IMR-90 (cell line): ENCODE measurements at regions of chr3 and their contacts with region 1.

Region 1: GRCh38 chr3:42547401-42547945 is 34.3 kb downstream of the SEC22C start:
- DNase-seq: peak; percentile 44
- ATAC-seq: peak; percentile 81
- H3K4me3 ChIP-seq: no peak overlapping the region
- H3K27ac ChIP-seq: no peak overlapping the region
- H3K4me1 ChIP-seq: no peaks in the 10 kb centered on the region; the same call in 1 of the 2 replicates
- H3K27me3 ChIP-seq: no peaks in the 10 kb centered on the region
- CTCF ChIP-seq: peak; percentile 74
- POLR2A ChIP-seq: no peak
- RAD21 ChIP-seq: peak; percentile 45

Region 2: GRCh38 chr3:42376344-42376798 is 171.1 kb before region 1 on chr3:
- CTCF ChIA-PET with region 1: no interaction called
- POLR2A ChIA-PET with region 1: no interaction called
- dilution Hi-C with region 1: no loop called
- in situ Hi-C with region 1: no loop called
- intact Hi-C with region 1: no loop called
- DNase-seq: peak; percentile 72
- ATAC-seq: peak; percentile 64
- H3K4me3 ChIP-seq: no peak overlapping the region
- H3K27ac ChIP-seq: no peak overlapping the region
- H3K4me1 ChIP-seq: no peaks in the 10 kb centered on the region
- H3K27me3 ChIP-seq: no peaks in the 10 kb centered on the region
- CTCF ChIP-seq: no peak
- POLR2A ChIP-seq: no peak
- RAD21 ChIP-seq: no peak

Region 3: DNA sequence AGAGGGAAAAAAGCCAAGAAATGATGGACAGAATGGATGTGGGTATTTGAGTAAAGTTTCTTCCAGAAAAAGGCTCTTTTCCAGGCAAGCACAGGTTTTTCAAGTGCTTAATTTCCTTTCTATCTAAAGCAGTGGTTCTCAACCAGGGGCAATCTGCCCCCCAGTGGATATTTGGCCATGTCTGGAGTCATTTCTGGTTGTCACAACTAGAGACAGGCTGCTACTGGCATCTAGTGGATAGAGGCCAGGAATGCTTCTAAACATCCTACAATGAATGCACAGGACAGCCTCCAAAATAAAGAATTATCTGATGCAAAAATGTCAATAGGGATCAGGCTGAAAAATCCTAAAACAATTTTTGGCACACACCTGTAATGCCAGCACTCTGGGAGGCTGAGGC is 10.4 kb after region 1 on chr3:
- CTCF ChIA-PET with region 1: interaction called, 10 read pairs
- POLR2A ChIA-PET with region 1: no interaction called
- dilution Hi-C with region 1: no loop called
- in situ Hi-C with region 1: no loop called
- intact Hi-C with region 1: no loop called
- DNase-seq: no peak
- ATAC-seq: no peak
- H3K4me3 ChIP-seq: no peak overlapping the region
- H3K27ac ChIP-seq: no peak overlapping the region
- H3K4me1 ChIP-seq: no peaks in the 10 kb centered on the region
- H3K27me3 ChIP-seq: no peaks in the 10 kb centered on the region
- CTCF ChIP-seq: no peak
- POLR2A ChIP-seq: no peak
- RAD21 ChIP-seq: no peak

Region 4: DNA sequence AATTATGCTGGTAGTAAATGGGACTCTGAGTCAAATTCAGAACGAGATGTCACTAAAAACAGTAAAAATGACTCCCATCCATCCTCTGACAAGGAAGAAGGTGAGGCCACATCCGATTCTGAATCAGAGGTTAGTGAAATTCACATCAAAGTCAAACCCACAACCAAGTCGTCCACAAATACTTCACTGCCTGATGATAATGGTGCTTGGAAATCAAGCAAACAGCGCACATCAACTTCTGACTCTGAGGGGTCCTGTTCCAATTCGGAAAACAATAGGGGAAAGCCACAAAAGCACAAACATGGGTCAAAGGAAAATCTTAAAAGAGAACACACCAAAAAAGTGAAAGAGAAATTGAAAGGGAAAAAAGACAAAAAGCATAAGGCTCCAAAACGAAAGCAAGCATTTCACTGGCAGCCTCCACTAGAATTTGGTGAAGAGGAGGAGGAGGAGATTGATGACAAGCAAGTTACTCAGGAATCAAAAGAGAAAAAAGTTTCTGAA is 90.9 kb after region 1 on chr3:
- CTCF ChIA-PET with region 1: no interaction called
- POLR2A ChIA-PET with region 1: no interaction called
- dilution Hi-C with region 1: no loop called
- in situ Hi-C with region 1: no loop called
- intact Hi-C with region 1: no loop called
- DNase-seq: no peak
- ATAC-seq: no peak
- H3K4me3 ChIP-seq: no peak overlapping the region
- H3K27ac ChIP-seq: no peak overlapping the region
- H3K4me1 ChIP-seq: no peaks in the 10 kb centered on the region
- H3K27me3 ChIP-seq: no peaks in the 10 kb centered on the region
- CTCF ChIP-seq: no peak
- POLR2A ChIP-seq: no peak
- RAD21 ChIP-seq: no peak

Region 5: DNA sequence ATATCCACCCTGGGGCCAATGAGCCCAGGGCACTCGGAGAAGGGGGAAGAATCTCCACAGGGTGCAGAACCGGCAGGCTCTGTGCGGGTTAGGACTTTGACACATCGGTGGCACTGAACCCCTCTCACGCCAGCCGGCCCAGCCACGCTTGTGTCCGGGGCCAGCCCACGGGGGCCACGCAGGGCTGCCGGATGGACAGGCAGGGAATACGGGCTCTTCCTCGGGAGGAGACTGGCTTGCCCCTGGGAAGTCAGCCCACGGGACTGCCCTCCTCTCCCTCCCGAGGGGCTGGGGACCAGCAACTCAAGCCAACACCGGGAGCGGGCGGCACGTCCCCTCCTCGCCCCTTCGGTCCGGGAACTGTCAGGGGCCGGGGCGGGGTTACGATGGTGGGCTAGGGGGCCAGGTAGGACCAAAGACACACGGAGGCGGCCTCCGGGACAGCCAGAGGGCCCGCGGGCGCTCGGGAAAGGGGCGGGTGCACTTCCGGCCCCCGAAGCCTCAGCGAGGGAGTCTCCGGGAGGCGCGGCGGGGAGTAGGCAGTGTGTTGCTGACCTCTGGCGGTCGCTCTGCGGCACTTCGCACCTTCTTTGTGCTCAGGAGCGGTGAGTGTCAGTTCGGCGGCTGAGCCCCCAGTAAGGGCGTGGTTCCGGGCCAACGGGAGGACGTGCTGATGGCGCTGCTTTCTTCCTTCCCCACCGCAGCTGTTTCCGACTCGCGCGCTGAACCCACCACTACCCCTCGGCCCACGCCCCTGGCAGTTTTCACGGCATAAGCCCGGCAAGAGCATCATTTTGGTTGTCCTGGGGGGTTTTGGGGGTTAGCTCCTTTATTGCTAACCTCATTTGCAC is 333.4 kb after region 1 on chr3:
- CTCF ChIA-PET with region 1: no interaction called
- POLR2A ChIA-PET with region 1: no interaction called
- dilution Hi-C with region 1: no loop called
- in situ Hi-C with region 1: no loop called
- intact Hi-C with region 1: loop called (anchors 10 kb)
- DNase-seq: peak; percentile 61
- ATAC-seq: peak; percentile 99
- H3K4me3 ChIP-seq: peak overlapping the region; percentile 48
- H3K27ac ChIP-seq: no peak overlapping the region; the same call in 1 of the 2 replicates
- H3K4me1 ChIP-seq: no peaks in the 10 kb centered on the region
- H3K27me3 ChIP-seq: peaks cover 13% of the 10 kb centered on the region
- CTCF ChIP-seq: peak; percentile 81
- POLR2A ChIP-seq: 0 out of 2 replicates have a peak, but pooled peaks have one; percentile 28
- RAD21 ChIP-seq: peak; percentile 80